ENCODE measurements at regions of chr5 and their contacts with region 1.

Region 1: DNA sequence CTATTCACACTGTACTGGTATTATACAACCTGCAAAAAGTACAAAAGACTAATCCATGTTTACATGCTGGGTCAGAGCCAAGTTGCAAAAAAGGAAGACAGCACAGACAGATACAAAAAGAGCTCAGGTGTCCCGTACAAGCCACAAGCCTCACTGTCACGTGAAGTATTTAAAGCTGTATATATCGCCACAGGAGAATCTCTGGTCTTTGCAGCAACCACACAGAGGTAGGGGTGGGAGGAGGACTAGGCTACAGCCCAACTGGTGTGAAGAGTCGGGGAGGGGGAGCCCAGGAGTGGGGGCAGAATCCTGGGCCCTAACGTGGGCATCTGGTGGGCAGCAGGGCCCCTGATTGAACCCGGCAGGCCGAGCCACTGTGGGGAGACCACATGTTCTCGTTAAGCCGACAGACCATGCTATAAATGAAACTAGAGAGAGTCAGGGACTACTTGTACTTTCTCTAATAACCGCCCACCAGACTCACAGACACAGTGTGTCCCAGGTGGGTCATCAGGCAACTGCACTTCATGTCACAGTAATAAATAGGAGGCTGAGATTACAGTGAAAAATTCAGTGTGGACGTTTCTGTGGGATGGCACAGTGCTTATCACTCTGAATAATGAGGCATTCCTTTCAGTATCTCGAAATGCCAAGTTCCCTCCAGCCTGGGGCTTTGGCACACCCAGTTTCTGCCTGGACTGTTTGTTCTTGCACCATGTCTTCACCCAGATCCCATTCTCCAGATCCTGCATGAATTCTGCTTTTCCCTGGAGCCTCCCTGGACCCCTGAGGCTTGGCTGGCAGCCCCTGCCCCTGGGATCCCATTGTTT is 79.3 kb upstream of the SH3PXD2B start:
- DNase-seq: no peak
- ATAC-seq: no peak
- H3K4me3 ChIP-seq: no peak overlapping the region
- H3K27ac ChIP-seq: no peak overlapping the region
- H3K4me1 ChIP-seq: no peaks in the 10 kb centered on the region
- H3K27me3 ChIP-seq: no peaks in the 10 kb centered on the region

Region 2: DNA sequence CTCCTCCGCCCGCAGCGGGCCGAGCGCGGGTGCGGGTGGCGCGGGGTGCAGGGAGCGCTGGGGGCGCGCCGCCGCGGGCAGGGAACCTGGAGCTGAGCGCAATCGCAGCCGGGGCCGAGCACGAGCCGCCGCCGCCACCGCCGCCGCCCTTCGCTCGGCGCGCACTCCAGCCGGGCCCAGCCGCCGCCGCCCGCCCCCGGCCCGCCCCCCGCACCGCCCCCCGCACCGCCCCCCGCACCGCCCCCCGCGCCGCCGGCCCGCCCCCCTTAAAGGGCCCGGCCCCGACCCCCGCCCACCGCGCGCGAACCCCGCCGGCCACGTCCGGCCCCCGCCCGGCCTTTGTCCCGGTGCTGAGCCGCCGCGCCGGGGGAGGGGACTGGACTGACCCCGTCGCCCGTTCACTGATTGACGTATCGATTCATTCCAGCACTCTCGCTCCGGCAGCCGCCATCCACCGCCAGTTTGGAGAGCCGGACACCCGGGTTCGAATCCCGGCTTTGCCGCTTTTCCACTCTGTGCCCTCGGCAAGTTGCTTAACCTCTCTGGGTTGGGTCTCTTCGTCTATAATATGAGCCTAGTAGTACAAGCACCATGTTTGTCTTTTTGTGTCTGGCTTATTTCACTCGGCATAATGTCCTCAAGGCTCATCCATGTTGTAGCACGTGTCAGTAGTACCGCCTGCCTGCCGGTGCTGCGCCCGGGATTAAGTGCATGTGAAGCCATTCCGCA is 79.1 kb before region 1 on chr5 and contains the start of gene SH3PXD2B:
- intact Hi-C with region 1: no loop called
- DNase-seq: peak; percentile 75 to 88
- ATAC-seq: peak; percentile 31
- H3K4me3 ChIP-seq: peak within 1 kb of the TSS; percentile 90 to 92
- H3K27ac ChIP-seq: peak within 1 kb of the TSS in 1 of 2 donors; percentile 89
- H3K4me1 ChIP-seq: no peaks in the 10 kb centered on the region
- H3K27me3 ChIP-seq: no peaks in the 10 kb centered on the region
- total RNA-seq, gene SH3PXD2B: 43.3 to 69.1 TPM

Region 3: GRCh38 chr5:172569861-172570558 is 36.4 kb after region 1 on chr5:
- intact Hi-C with region 1: no loop called
- DNase-seq: no peak
- ATAC-seq: no peak
- H3K4me3 ChIP-seq: no peak overlapping the region
- H3K27ac ChIP-seq: no peak overlapping the region
- H3K4me1 ChIP-seq: no peaks in the 10 kb centered on the region
- H3K27me3 ChIP-seq: no peaks in the 10 kb centered on the region

Region 4: DNA sequence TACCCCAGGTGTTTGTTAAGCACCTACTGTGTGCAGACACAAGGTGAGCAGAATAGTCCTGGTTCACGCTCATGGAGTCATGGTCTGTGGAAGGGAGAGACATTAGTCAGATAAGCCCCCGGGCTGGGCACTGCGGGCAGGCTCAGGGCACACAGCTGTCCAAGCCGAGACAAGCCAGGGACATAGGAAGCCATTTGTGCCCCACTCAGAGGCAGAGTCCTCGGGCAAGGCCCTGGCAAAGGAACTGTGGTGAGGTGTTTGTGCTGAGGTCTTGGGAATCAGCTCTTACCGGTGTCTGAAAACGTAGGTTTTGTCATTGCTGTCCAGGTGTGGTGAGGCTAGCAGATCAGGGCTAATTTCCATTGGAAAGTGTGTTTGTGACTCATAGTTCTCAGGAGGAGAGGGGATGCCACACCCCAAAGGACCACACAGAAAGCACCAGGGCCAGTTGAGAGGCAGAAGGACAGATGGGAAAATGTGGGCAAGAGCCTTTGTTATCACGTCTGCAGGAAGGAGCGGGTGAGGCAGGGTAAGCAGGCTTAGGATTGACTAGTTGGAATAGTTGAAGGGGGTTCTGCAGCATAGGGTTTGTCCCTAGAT is 61.4 kb after region 1 on chr5:
- intact Hi-C with region 1: loop called in 1 of 2 experiments (anchors 2 kb)
- DNase-seq: peak in 1 of 2 donors; percentile 55
- ATAC-seq: no peak
- H3K4me3 ChIP-seq: no peak overlapping the region
- H3K27ac ChIP-seq: no peak overlapping the region
- H3K4me1 ChIP-seq: no peaks in the 10 kb centered on the region
- H3K27me3 ChIP-seq: no peaks in the 10 kb centered on the region

Measured in aorta (tissue), 5 donors.